ENCODE measurements at regions of chr11 and their contacts with region 1.

Region 1: DNA sequence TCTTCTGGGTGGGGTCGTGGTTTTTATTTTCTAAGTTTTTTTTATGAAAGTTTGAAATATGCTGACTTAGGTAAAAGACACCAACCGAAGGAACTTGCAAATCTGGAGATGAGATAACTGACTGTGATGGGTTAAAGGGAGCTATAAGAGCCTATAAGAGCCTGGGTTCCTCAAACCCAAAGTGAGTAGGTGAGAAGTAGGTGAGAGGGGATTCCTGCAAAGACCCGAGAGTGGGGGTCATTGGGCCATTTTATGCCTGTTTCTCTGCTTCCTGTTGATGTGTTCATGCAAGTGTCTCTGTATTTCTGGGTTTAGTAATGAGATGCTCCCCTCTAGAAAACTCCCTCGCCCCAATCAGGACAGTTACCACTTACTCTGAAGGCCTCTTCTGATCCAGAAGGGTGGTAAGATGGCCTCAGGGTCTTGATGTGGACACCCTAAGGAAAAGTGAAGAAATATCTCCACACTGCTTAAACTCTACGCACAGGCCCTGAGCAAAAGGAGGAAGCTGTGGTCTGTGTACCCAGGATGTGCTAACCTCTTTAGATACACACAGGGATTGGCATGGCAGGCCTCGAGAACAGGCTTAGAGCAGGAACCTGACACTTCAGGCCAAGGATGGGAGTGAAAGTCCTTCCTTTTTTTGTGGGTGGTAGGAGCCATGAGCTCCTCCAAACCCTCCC is 1.8 kb downstream of the FLI1 start:
- DNase-seq: no peak
- ATAC-seq: peak; percentile 52
- H3K4me3 Mint-ChIP-seq: peak overlapping the region; percentile 96
- H3K27ac Mint-ChIP-seq: peak overlapping the region; percentile 97
- H3K4me1 Mint-ChIP-seq: peaks cover 72% of the 10 kb centered on the region
- H3K27me3 Mint-ChIP-seq: peaks cover 1% of the 10 kb centered on the region
- CTCF ChIP-seq: no peak

Region 2: GRCh38 chr11:128714881-128715280 is 19.2 kb after region 1 on chr11:
- CTCF ChIA-PET with region 1: interaction called, 4 read pairs
- POLR2A ChIA-PET with region 1: interaction called, 53 read pairs
- intact Hi-C with region 1: loop called (anchors 1 kb)
- DNase-seq: no peak
- ATAC-seq: no peak
- H3K4me3 Mint-ChIP-seq: no peak overlapping the region
- H3K27ac Mint-ChIP-seq: peak overlapping the region; percentile 98
- H3K4me1 Mint-ChIP-seq: peaks cover 97% of the 10 kb centered on the region
- H3K27me3 Mint-ChIP-seq: no peaks in the 10 kb centered on the region
- CTCF ChIP-seq: no peak

Region 3: GRCh38 chr11:128720522-128720985 is 24.9 kb after region 1 on chr11:
- CTCF ChIA-PET with region 1: interaction called, 4 read pairs
- POLR2A ChIA-PET with region 1: interaction called, 53 read pairs
- intact Hi-C with region 1: loop called (anchors 1 kb)
- DNase-seq: peak; percentile 42
- ATAC-seq: peak; percentile 56
- H3K4me3 Mint-ChIP-seq: peak overlapping the region; percentile 87
- H3K27ac Mint-ChIP-seq: peak overlapping the region; percentile 98
- H3K4me1 Mint-ChIP-seq: peaks cover 99% of the 10 kb centered on the region
- H3K27me3 Mint-ChIP-seq: no peaks in the 10 kb centered on the region
- CTCF ChIP-seq: no peak

Region 4: GRCh38 chr11:128725630-128726319 is 30.1 kb after region 1 on chr11:
- CTCF ChIA-PET with region 1: interaction called, 5 read pairs
- POLR2A ChIA-PET with region 1: interaction called, 53 read pairs
- intact Hi-C with region 1: loop called (anchors 1 kb)
- DNase-seq: peak; percentile 42
- ATAC-seq: peak; percentile 64
- H3K4me3 Mint-ChIP-seq: peak overlapping the region; percentile 83
- H3K27ac Mint-ChIP-seq: peak overlapping the region; percentile 98
- H3K4me1 Mint-ChIP-seq: peaks cover 98% of the 10 kb centered on the region
- H3K27me3 Mint-ChIP-seq: no peaks in the 10 kb centered on the region
- CTCF ChIP-seq: no peak

Region 5: GRCh38 chr11:128733440-128734102 is 37.9 kb after region 1 on chr11:
- CTCF ChIA-PET with region 1: interaction called, 3 read pairs
- POLR2A ChIA-PET with region 1: interaction called, 54 read pairs
- intact Hi-C with region 1: loop called (anchors 1 kb)
- DNase-seq: no peak
- ATAC-seq: peak; percentile 17
- H3K4me3 Mint-ChIP-seq: peak overlapping the region; percentile 71
- H3K27ac Mint-ChIP-seq: peak overlapping the region; percentile 98
- H3K4me1 Mint-ChIP-seq: peaks cover 99% of the 10 kb centered on the region
- H3K27me3 Mint-ChIP-seq: no peaks in the 10 kb centered on the region
- CTCF ChIP-seq: no peak

Region 6: GRCh38 chr11:128766591-128767081 is 71.0 kb after region 1 on chr11:
- CTCF ChIA-PET with region 1: no interaction called
- POLR2A ChIA-PET with region 1: interaction called, 10 read pairs
- intact Hi-C with region 1: no loop called
- DNase-seq: no peak
- ATAC-seq: no peak
- H3K4me3 Mint-ChIP-seq: no peak overlapping the region
- H3K27ac Mint-ChIP-seq: no peak overlapping the region
- H3K4me1 Mint-ChIP-seq: peaks cover 3% of the 10 kb centered on the region
- H3K27me3 Mint-ChIP-seq: no peaks in the 10 kb centered on the region
- CTCF ChIP-seq: no peak